Activated B cell treated with CpG ODN at 0.5 μM for 24 hours (primary cell): ENCODE measurements at regions of chr1 and their contacts with region 1.

Region 1: DNA sequence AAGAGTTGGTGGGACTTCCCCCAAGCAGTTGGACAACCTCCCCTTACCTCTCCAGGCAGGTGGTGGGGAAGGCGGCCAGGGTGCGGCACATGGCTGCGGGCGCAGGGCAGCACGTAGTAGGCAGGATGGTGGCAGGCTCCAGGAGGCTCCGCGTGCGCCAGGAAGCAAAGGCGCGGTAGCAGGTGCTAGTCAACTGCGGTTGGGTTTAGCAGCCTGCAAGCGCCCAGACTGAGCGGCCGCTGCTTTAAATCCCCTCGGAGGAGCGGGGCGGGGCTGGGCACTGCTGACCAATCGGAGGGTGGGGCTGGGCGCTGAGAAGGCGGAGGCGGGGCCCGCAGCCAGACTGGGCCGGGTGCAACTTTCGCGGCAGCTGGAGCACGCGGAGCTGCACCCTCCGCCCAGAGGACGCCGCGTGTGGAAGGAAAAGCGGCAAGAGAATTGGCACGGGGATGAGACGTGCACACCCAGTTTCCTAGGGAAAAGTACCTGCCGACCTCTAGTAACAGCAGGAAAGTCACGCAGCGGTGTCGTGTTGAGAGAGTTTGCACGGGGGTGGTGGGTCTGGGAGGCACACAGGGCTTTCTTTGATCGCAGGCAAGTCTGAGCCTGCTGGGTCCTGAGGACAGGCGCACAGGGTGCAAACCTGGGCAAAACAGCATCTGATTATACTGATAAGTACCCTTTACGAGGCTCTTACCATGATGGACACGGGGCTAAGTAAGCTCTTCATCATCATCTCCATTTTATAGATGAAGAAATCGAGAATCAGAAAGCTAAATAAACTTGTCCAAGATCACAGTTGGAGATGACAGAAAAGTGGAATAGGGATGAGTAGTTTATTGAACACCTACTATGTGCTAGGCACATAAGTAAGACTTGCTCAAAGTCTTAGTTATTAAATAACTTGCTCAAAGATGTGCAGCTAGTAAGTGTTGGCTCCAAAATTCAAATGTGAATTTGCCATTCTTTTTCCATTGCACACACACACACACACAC is at the start of gene RGS16:
- DNase-seq: peak; percentile 88
- ATAC-seq: peak; percentile 98
- H3K4me3 Mint-ChIP-seq: no peak within 1 kb of the TSS
- H3K27ac Mint-ChIP-seq: peak within 1 kb of the TSS; percentile 73
- H3K4me1 Mint-ChIP-seq: peaks cover 4% of the 10 kb centered on the region
- H3K27me3 Mint-ChIP-seq: no peaks in the 10 kb centered on the region
- CTCF ChIP-seq: no peak
- total RNA-seq, gene RGS16: 2.6 TPM in 2 replicates

Region 2: DNA sequence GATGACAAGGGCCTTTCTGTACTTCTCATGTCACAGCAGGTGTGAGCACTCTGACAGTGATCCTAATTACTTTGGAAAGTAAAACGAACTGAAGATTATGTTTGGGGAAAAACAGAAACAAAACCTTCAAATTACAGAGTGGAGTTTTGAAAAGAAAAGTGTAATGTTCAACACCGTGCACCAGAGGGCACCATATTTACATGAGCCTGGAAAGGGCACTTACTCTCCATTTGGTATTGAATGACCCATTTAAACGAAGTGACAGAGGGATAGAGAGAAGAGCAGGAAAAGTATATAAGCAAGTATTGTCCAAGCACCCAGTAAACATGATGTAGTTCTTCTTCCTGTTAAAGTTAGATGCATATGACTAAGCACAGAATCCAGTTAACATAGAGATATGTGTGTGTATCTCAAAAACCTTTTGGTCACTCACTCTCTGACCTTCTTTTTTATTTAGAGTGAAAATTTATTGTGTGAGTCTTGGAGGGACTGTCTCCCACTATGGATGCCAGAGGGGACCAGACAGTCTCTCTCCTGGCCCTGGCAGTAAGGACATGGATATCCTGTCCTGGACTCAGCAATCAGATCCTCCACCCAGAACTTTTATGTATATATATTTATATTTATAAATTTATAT is 158.3 kb before region 1 on chr1:
- CTCF ChIA-PET with region 1: interaction called, 5 read pairs
- POLR2A ChIA-PET with region 1: no interaction called
- intact Hi-C with region 1: loop called (anchors 1 kb)
- DNase-seq: no peak
- ATAC-seq: peak; percentile 81
- H3K4me3 Mint-ChIP-seq: no peak overlapping the region
- H3K27ac Mint-ChIP-seq: no peak overlapping the region
- H3K4me1 Mint-ChIP-seq: peaks cover 4% of the 10 kb centered on the region
- H3K27me3 Mint-ChIP-seq: no peaks in the 10 kb centered on the region
- CTCF ChIP-seq: peak; percentile 58

Region 3: GRCh38 chr1:182473556-182473955 is 130.9 kb before region 1 on chr1:
- CTCF ChIA-PET with region 1: no interaction called
- POLR2A ChIA-PET with region 1: no interaction called
- intact Hi-C with region 1: no loop called
- DNase-seq: no peak
- ATAC-seq: no peak
- H3K4me3 Mint-ChIP-seq: no peak overlapping the region
- H3K27ac Mint-ChIP-seq: no peak overlapping the region
- H3K4me1 Mint-ChIP-seq: peaks cover 6% of the 10 kb centered on the region
- H3K27me3 Mint-ChIP-seq: peaks cover 2% of the 10 kb centered on the region
- CTCF ChIP-seq: no peak

Region 4: GRCh38 chr1:182588500-182589452 is 15.7 kb before region 1 on chr1 and contains the start of gene RNASEL:
- CTCF ChIA-PET with region 1: interaction called, 7 read pairs
- POLR2A ChIA-PET with region 1: interaction called, 22 read pairs
- intact Hi-C with region 1: loop called (anchors 1 kb)
- DNase-seq: peak; percentile 39
- ATAC-seq: peak; percentile 90
- H3K4me3 Mint-ChIP-seq: peak within 1 kb of the TSS; percentile 92
- H3K27ac Mint-ChIP-seq: peak within 1 kb of the TSS; percentile 96
- H3K4me1 Mint-ChIP-seq: peaks cover 52% of the 10 kb centered on the region
- H3K27me3 Mint-ChIP-seq: no peaks in the 10 kb centered on the region
- CTCF ChIP-seq: no peak
- total RNA-seq, gene RNASEL: 10.0 and 11.1 TPM in 2 replicates

Region 5: DNA sequence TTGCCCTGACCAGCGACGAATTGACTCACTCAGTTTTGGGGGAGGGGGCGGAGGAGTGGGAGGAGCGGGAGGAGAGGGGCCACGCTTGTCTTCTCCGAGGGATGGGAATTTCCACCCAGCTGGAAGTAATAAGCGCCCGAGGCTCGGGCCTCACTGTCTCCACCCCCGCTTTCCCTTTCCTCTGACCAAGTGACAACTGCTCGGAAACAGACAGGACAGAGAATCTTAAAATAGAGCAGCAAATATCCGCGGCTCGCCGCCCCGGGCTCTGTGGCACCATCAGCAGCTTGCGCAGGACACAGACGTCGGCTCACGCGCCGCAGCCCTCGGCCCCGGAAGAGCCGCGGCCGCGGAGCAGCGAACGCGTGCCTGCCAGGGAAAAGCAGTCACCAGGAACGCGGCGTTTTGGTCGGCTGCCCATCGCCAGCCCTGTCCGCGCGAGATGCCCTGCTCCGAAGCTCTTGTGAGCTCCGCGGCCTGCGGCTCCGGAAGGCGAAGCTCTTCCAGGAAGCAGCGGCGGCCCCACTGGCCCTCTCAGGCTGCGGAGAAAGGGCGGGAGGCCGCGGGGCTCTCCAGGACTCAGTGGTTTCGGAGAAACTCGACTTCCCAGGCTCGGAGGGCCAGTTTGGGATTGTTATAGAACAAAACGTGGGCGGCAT is 10.5 kb after region 1 on chr1:
- CTCF ChIA-PET with region 1: interaction called, 7 read pairs
- POLR2A ChIA-PET with region 1: interaction called, 33 read pairs
- intact Hi-C with region 1: loop called (anchors 1 kb)
- DNase-seq: peak; percentile 58
- ATAC-seq: peak; percentile 75
- H3K4me3 Mint-ChIP-seq: peak overlapping the region; percentile 87
- H3K27ac Mint-ChIP-seq: peak overlapping the region; percentile 81
- H3K4me1 Mint-ChIP-seq: peaks cover 43% of the 10 kb centered on the region
- H3K27me3 Mint-ChIP-seq: peaks cover 11% of the 10 kb centered on the region
- CTCF ChIP-seq: no peak

Region 6: DNA sequence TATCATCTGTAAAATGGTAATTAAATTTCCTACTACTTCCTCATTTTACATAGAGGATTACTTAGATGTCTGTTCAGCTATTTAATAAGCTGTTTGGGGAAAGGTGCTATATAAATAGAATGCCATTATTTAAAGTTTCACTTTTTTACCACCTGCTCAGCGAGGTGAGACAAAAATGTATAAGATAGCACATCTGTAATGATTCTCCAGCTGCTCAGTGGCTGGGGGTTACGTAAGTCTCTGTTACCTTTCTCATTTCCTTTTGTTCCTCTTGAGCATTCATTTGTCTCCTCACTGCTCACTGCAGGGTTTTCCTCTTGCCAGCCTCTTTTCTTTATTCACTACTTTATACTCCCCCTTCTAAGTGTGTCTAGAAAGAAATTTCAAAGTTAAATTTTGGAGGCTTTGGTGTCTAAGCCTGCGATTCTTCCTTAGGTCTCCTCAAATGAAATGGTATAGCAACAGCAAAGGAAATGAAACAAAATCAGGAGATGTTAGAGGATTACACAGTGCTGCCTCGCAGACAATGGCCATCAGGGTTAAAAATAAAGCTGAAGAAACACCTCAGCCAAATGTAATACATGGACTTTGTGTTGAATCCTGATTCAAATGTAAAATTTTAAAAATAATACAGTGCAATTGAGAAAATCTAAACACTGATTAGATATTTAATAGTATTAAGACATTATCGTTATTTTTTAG is 73.1 kb after region 1 on chr1:
- CTCF ChIA-PET with region 1: interaction called, 3 read pairs
- POLR2A ChIA-PET with region 1: no interaction called
- intact Hi-C with region 1: loop called (anchors 5 kb)
- DNase-seq: no peak
- ATAC-seq: peak; percentile 72
- H3K4me3 Mint-ChIP-seq: peak overlapping the region; percentile 47
- H3K27ac Mint-ChIP-seq: no peak overlapping the region
- H3K4me1 Mint-ChIP-seq: peaks cover 27% of the 10 kb centered on the region
- H3K27me3 Mint-ChIP-seq: peaks cover 7% of the 10 kb centered on the region
- CTCF ChIP-seq: no peak

Region 7: DNA sequence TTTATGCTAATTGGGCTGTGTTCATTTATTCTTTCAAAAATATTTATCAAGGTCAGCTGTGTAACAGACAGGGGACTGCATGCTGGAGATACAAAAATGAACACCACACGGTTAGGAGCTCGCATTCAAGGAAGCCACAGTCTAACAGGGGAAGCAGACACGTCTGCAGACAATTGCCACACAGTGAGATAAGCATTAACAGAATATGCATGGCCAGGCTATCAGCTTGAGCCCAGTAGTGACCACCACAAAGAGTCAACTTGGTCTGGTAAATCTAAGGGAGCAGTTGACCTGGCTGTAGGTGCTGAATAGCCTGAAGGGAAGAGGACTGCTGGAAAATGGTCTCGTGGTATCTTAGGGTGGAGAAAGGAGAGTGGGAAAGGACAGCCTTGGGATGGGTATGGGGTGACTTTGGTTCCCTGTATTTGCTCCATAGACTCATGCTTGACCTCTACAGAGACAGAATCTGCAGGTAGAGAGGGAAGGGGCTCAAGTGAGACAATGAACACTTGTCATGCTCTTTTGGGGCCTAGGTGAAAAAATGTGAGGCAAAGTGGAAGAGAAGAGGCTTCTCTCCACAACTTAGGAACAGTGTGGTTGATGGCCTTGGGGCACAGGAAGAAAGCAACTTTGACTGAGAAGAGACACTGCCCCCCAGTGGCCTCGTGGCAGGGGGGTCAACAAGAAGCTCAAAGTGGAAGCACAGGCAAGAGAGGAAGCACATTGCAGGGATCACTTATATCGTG is 177.5 kb after region 1 on chr1:
- CTCF ChIA-PET with region 1: interaction called, 562 read pairs
- POLR2A ChIA-PET with region 1: interaction called, 29 read pairs
- intact Hi-C with region 1: loop called (anchors 1 kb)
- DNase-seq: peak; percentile 54
- ATAC-seq: peak; percentile 88
- H3K4me3 Mint-ChIP-seq: no peak overlapping the region
- H3K27ac Mint-ChIP-seq: no peak overlapping the region
- H3K4me1 Mint-ChIP-seq: peaks cover 10% of the 10 kb centered on the region
- H3K27me3 Mint-ChIP-seq: no peaks in the 10 kb centered on the region
- CTCF ChIP-seq: peak; percentile 53

Region 8: GRCh38 chr1:182789138-182790076 is 184.9 kb after region 1 on chr1 and contains the start of gene NPL:
- CTCF ChIA-PET with region 1: interaction called, 562 read pairs
- POLR2A ChIA-PET with region 1: interaction called, 5 read pairs
- intact Hi-C with region 1: loop called (anchors 1 kb)
- DNase-seq: peak; percentile 78
- ATAC-seq: peak; percentile 94
- H3K4me3 Mint-ChIP-seq: peak within 1 kb of the TSS; percentile 93
- H3K27ac Mint-ChIP-seq: peak within 1 kb of the TSS; percentile 80
- H3K4me1 Mint-ChIP-seq: peaks cover 17% of the 10 kb centered on the region
- H3K27me3 Mint-ChIP-seq: peaks cover 3% of the 10 kb centered on the region
- CTCF ChIP-seq: no peak
- total RNA-seq, gene NPL: 1.9 and 2.9 TPM in 2 replicates

Region 9: DNA sequence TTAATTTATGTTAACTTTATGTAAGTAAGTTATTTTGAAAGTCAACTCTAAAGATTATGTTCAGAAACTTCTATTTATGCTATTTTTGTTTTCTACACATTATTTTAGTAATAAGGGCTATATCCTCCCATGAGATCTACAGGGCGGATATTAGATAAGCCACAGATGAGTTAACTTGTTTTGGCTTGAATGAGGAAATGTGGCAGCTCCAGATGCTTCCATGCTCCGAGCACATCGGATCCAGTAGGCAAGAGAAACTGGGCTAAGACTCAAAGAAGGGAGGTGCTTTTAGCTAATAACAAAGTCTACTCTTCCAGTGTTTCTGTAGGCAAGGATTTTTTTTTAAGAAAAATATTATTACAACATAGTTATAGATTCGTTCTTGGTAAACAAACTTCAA is 398.7 kb after region 1 on chr1:
- CTCF ChIA-PET with region 1: no interaction called
- POLR2A ChIA-PET with region 1: no interaction called
- intact Hi-C with region 1: no loop called
- DNase-seq: no peak
- ATAC-seq: no peak
- H3K4me3 Mint-ChIP-seq: no peak overlapping the region
- H3K27ac Mint-ChIP-seq: no peak overlapping the region
- H3K4me1 Mint-ChIP-seq: no peaks in the 10 kb centered on the region
- H3K27me3 Mint-ChIP-seq: peaks cover 17% of the 10 kb centered on the region
- CTCF ChIP-seq: no peak